Mucosa of descending colon (tissue), 3 donors: ENCODE measurements at regions of chr1 and their contacts with region 1.

Region 1: GRCh38 chr1:179190861-179191260 is 38.6 kb downstream of the ABL2 start:
- DNase-seq: peak in 1 of 3 donors; percentile 16
- ATAC-seq: no peak
- H3K4me3 ChIP-seq: no peak overlapping the region
- H3K4me1 ChIP-seq: peaks cover 4% of the 10 kb centered on the region
- CTCF ChIP-seq: no peak

Region 2: GRCh38 chr1:178870944-178871343 is 319.9 kb before region 1 on chr1 and contains the start of gene ANGPTL1:
- intact Hi-C with region 1: no loop called
- DNase-seq: peak in 1 of 3 donors; percentile 13
- ATAC-seq: peak; percentile 22
- H3K4me3 ChIP-seq: no peak within 1 kb of the TSS
- H3K4me1 ChIP-seq: peaks cover 15% of the 10 kb centered on the region
- CTCF ChIP-seq: no peak
- total RNA-seq, gene ANGPTL1: 2.8 to 98.1 (median 18.4) TPM

Region 3: DNA sequence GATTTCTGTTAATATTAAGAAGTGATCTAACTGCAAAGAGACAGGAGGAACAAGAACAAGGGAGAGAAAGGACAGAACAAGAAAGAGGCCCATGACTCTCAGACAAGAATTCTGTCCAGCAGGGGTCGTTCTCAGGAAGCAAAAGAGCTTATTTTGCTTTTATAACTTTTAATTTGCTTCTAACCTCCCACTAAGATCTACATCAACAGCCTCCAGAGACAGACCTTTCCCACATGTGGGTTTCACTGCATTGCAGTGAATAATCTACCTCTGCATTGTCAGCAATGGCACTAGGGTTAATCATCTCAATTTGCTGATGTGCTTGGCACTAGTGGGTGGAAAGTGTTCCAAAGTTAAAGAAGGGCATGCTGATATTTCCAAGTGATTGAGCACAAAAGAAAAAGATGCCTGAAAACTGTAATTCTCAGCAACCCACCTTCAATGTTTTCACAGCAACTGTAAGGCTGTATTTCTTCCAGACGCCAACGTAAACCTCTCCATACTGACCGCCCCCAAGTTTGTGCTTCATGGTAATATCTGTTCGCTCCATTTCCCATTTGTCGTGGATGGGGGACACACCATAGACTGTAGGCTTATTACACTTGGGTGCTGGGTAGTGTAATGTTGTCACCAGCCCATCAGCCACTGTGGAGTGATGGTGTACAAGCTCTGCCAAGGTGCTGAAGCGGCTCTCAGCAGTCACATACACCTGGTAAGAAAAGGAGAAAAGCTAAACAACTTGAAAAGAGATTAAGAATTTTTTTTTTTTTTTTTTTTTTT is 69.5 kb before region 1 on chr1:
- intact Hi-C with region 1: loop called in 1 of 2 experiments (anchors 10 kb)
- DNase-seq: peak in 1 of 3 donors; percentile 83
- ATAC-seq: peak; percentile 58
- H3K4me3 ChIP-seq: no peak overlapping the region
- H3K4me1 ChIP-seq: peaks cover 7% of the 10 kb centered on the region
- CTCF ChIP-seq: no peak

Region 4: GRCh38 chr1:179340918-179341317 is 150.1 kb after region 1 on chr1:
- intact Hi-C with region 1: no loop called
- DNase-seq: no peak
- ATAC-seq: no peak
- H3K4me3 ChIP-seq: no peak overlapping the region
- H3K4me1 ChIP-seq: no peaks in the 10 kb centered on the region
- CTCF ChIP-seq: no peak